ENCODE measurements at regions of chr5 and their contacts with region 1.

Region 1: GRCh38 chr5:43484106-43484849 is 613 bp upstream of the TMEM267 start:
- DNase-seq: peak; percentile 71 to 97 (median 79)

Region 2: DNA sequence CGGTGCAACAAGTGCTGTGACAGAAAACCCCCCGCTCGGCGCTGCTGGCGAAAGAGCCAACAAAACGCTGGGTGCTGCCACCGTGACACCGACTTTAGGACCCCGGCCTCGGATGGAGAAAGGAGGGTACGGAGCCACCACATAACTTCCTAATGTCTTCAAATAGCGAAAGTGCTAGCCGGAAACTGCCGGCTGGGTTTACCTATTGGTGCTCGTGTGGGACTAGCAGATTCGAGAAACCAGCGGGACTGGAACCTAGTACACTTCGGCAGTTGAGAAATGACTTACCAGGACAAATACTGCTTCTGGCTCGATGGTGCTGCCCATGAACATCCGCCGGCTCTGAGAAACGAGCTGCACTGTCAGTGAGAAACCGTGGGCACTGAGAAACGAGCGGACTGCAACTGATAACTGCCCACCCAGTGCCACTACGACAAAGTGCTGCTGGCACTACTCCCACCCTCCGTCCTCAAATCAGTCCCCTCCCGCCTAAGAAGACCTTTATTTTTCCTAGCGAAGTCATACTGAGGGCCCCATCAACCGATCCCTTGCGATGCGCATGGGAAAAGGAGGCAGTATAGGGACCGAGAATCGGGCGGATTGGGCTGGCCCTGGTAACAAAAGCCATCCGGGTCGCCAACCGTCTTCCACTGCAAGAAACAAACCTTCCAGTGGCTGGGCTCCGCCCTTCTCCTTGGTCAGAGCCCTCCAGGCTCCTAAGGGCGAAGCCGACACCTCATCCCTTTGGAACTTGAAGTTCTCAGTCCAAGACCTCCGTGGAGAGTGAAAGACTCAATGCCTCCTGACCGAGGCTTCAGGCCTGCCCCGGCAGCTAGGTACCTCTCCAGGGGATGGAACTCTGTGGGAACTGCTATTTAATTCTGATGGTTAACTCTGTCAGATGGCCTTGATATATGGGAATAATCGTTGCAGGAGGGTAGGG is 417.2 kb before region 1 on chr5:
- intact Hi-C with region 1: loop called (anchors 10 kb)
- DNase-seq: peak; percentile 74 to 97 (median 86)

Region 3: DNA sequence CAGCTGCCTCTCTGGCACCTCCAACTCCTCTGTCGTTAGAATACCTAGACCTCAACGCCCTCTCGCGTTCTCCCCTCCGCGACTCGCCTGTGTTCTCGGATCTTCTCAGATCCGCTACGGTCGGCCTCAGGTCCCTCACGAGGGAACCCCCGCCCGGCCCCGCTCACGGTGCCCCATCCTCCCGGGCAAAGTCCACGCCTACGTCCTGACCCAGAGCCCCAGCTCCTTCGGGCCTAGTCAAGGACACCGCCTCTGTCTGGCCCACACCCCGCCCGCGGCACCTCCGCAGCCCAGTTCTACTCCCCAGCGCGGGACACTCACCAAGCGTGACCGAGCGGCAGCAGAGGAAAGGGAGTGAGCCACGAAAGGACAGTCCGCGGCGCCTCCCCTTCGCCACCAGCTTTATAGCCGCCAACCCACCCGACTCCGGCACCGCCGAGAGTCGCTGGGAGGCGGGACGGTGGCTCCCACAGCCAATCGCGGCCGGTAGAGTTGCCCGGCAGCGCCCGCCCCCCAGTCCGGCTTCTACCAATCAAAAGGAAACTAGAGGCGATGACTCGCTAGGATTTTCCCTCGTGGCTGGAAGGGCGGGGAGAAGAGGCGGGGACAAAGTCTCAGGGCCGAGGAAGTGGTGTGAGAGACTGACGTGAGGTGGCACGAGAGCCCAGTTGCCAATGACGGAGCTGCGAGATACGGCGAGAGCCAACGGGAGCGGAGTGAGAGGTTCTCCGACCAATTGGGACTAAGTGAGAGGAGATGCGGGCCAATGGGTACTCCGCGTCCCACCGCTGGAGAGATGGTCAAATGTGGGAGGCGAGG is 171.0 kb before region 1 on chr5 and contains the start of gene HMGCS1:
- intact Hi-C with region 1: loop called (anchors 5 kb)
- DNase-seq: peak; percentile 97 to 100 (median 99)

Region 4: GRCh38 chr5:43357067-43357466 is 127.2 kb before region 1 on chr5:
- intact Hi-C with region 1: no loop called
- DNase-seq: no peak

Region 5: DNA sequence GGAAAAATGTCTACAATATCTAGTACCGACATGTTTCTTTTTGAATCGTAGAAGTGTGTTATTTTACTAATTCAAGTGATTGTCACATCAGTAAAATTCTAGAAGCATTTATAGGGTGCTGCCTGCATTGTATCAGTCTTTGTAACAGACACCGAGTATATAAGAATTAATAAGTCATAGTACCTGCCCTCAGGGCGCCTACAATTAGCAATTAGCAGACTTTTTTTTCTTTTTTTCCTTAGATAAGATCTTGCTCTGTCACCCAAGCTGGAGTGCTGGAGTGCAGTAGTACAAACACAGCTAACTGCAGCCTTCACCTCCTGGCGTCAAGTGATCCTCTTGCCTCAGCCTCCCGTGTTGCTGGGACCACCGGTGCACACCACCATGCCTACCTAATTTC is 86.3 kb before region 1 on chr5:
- intact Hi-C with region 1: loop called (anchors 2 kb)
- DNase-seq: no peak

Region 6: DNA sequence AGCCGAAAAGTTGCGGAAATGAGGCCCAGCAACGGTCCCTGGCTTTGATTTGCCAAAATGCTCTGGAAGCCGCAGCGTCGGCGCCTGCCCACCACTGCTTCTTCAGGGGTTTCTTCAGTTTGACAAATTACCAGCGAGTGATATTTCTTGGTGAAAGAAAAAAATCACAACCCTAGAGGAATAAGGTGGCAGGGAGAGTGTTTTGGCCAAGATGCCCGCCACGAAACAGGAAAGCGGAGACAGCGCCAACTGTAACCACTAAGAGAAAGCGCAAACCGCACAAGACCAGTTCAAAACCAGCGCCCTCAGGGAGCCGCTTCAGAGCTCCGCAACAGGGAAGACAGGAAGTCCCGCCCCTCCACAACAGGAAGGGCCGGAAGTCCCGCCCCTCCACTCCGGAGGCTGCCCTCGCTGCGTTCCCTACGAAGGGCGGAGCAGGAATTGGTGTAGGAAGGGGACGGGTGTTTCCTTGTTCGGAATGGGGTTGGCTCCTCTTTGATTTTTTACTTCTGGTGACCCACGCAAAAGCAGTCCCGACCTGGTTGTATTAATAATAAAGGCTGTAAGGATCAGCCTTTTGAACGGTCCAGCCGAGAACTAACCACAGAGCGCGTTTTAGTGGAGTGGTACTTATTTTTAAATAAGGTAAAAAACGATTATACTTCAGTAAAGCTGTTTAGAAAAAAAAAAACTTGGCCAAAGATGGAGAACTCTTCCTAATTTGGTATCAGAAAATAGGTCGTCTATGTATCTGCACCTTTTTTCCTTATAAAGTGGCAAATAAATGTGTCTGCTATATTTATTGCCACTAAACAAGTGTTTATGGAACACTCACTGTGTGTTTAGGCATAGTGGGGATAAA is 30.8 kb after region 1 on chr5 and contains the start of gene C5orf34:
- intact Hi-C with region 1: loop called (anchors 2 kb)
- DNase-seq: peak; percentile 90 to 99 (median 96)

Region 7: DNA sequence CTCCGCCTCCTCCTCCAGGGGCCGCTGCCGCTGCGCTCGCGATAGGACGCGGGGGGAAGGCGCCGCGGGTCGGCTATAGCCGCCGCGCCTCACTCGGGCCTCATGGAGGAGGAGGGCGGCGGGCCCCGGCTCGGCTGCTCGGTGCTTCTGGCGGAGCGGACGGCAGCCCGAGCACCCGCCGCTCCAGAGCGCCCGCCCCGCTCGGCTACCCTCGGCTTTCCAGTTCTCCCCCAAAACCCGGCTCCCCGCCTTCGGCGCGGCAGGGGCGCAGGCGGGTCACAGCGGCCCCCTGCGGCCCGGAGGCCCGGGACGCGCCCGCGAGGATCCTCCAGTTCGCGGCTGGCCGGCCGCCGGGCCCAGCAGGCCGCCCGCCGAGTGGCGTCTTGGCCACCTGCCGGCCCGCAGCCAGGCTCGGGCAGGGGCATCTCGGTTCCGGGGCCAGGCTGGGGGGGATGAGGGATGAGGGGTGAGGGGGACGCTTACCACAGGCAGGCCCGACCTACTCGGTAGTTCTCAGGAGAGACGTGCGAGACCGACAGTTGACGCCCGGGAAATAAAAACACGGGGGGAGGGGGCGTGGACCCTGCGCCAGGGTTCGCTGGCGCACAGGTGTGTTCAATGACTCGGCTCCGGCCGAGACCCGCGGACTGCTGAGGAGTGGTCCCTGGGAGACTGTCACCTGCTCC is 72.7 kb after region 1 on chr5 and contains the start of gene PAIP1:
- intact Hi-C with region 1: loop called (anchors 2 kb)
- DNase-seq: peak; percentile 60 to 96 (median 72)

Region 8: GRCh38 chr5:43592363-43592762 is 108.1 kb after region 1 on chr5:
- intact Hi-C with region 1: no loop called
- DNase-seq: no peak

Region 9: DNA sequence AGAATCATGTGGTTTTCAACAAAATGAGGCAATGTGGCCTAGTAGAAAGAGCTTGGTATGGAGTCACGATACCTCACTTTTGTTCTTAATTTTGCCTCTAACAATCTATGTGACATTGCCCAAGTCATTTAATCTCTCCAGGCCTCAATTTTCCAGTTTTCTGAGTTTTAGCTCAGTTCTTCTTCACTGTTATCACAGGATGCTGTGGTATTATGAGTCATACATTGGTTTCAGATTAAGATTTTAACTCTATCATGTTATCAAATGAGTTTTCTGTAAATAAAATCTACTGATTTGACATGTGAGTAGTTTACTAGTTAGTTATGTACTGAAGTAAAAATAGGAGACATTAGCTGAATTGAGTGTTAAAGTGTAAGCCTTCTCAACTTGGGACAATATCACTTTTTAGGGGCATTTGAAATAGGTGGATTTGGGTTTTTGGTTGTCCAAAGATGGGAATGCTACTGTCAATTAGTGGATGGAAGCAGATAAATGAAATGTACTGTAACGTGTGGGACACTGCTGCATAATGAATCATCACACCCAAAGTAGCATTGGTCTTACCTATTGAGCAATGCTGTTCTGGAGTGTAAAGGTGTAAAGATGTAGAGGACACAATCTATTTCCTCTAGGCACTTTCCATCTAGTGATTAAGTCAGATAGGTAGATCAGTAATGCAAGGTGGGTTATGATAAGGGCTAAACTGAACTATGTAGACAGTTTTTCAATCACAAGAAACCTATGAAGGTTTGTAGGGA is 192.0 kb after region 1 on chr5:
- intact Hi-C with region 1: no loop called
- DNase-seq: no peak